ENCODE measurements at regions of chr5 and their contacts with region 1.

Region 1: GRCh38 chr5:32585446-32586275 is at the start of gene SUB1:
- DNase-seq: peak; percentile 87 to 98
- H3K4me3 ChIP-seq: peak within 1 kb of the TSS; percentile 84
- H3K27ac ChIP-seq: peak within 1 kb of the TSS; percentile 77
- H3K4me1 ChIP-seq: peaks cover 10% of the 10 kb centered on the region
- H3K27me3 ChIP-seq: no peaks in the 10 kb centered on the region
- CTCF ChIP-seq: no peak
- total RNA-seq, gene SUB1: 314 and 328 TPM in 2 replicates

Region 2: GRCh38 chr5:32174011-32174870 is 411.4 kb before region 1 on chr5 and contains the start of gene GOLPH3:
- CTCF ChIA-PET with region 1: no interaction called
- POLR2A ChIA-PET with region 1: interaction called, 9 read pairs
- intact Hi-C with region 1: loop called (anchors 2 kb)
- DNase-seq: peak; percentile 84 to 98
- H3K4me3 ChIP-seq: peak within 1 kb of the TSS; percentile 93
- H3K27ac ChIP-seq: peak within 1 kb of the TSS; percentile 95
- H3K4me1 ChIP-seq: peaks cover 43% of the 10 kb centered on the region
- H3K27me3 ChIP-seq: no peaks in the 10 kb centered on the region
- CTCF ChIP-seq: no peak
- total RNA-seq, gene GOLPH3: 179 and 267 TPM in 2 replicates

Region 3: DNA sequence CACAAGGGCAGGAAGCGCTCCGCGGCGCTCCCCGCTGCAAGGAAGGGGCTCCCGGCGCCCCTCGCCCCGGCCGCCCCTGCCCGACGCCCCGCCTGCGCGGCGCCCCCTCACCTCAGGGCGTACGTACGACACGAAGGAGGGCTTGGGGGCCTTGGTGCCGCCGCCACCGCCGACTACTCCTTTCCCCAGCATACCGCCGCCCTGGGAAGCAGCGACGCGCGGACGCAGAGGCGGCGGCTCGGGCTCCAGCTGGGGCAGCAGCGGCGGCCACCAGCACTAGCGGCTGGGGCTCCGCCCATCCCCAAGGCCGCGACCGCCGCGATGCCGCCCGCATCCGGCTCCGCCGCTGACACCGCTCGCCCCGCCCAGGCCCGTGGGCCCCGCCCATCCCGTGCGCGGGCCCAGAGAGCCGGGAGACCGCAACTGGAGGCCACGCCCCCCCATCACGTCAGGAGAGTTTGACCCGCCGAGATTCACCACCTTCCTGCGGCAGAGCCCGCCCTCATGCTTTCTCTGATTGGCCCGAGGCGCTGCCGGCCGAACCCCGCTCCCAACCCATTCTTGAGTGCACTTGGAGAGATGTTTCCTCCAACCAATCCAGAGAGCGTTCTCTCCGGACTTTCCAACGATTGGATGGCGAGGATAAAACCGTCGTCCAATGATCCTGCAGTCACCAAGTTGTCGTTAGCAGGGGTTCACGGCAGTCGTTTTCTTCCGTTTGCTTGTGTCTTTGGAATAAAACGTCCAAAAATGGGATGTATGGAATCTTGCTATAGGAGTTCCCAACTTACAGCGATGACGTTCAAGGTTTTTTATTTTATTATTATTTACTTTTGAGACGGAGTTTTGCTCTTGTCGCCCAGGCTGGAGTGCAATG is 272.8 kb before region 1 on chr5 and contains the start of gene MTMR12:
- CTCF ChIA-PET with region 1: interaction called, 3 read pairs
- POLR2A ChIA-PET with region 1: no interaction called
- intact Hi-C with region 1: loop called (anchors 10 kb)
- DNase-seq: peak; percentile 99 to 100
- H3K4me3 ChIP-seq: peak within 1 kb of the TSS; percentile 91
- H3K27ac ChIP-seq: peak within 1 kb of the TSS; percentile 14
- H3K4me1 ChIP-seq: peaks cover 10% of the 10 kb centered on the region
- H3K27me3 ChIP-seq: no peaks in the 10 kb centered on the region
- CTCF ChIP-seq: no peak
- total RNA-seq, gene MTMR12: 44.5 and 47.5 TPM in 2 replicates

Region 4: GRCh38 chr5:32390819-32391591 is 194.7 kb before region 1 on chr5:
- CTCF ChIA-PET with region 1: interaction called, 12 read pairs
- POLR2A ChIA-PET with region 1: no interaction called
- intact Hi-C with region 1: loop called (anchors 5 kb)
- DNase-seq: peak; percentile 47 to 66
- H3K4me3 ChIP-seq: no peak overlapping the region
- H3K27ac ChIP-seq: peak overlapping the region; percentile 49
- H3K4me1 ChIP-seq: no peaks in the 10 kb centered on the region
- H3K27me3 ChIP-seq: no peaks in the 10 kb centered on the region
- CTCF ChIP-seq: no peak

Region 5: DNA sequence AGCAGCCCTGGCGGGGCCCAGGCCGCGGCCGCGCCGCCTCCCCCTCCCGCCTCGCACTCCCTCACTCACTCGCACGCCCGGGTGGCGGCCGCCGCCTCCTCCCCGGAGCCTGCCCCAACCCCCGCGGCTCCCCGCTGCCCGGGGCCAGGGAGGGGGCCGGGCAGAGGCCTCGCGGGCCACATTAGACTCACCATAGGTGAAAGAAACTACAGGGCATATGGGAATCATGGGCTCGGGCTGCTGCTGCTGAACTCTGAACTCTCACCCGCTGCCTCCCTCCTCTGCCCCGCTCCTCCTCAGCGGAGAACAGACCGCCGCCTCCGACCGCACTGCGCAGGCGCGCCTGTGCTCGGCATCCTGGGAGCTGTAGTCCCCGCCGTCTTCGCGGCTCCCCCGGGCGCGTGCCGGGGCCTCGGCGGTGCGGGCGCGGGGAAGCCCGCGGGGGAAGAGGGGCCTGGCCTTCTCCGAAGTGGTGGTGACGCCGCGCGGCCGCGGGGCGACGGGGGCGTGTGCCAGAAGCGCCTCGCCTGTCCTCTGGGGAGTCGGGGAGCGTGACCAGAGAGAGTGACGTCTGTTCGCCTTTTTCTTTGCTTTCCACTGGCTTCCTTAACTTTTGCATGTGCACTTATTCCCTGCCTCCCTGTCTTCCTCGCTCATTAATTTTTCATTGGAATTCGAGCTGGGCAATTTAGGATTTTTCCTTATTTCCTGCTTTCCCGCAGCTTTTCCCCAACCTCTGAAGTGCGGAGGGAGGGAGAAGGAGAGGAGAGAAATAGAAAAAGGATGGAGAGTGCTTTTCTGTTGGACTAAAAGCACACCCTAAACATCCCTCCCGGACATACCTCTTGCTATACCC is 141.0 kb before region 1 on chr5 and contains the start of gene ZFR:
- CTCF ChIA-PET with region 1: interaction called, 4 read pairs
- POLR2A ChIA-PET with region 1: no interaction called
- intact Hi-C with region 1: loop called (anchors 1 kb)
- DNase-seq: peak; percentile 77 to 98
- H3K4me3 ChIP-seq: peak within 1 kb of the TSS; percentile 83
- H3K27ac ChIP-seq: peak within 1 kb of the TSS; percentile 61
- H3K4me1 ChIP-seq: peaks cover 40% of the 10 kb centered on the region
- H3K27me3 ChIP-seq: no peaks in the 10 kb centered on the region
- CTCF ChIP-seq: no peak
- total RNA-seq, gene ZFR: 51.8 and 69.2 TPM in 2 replicates

Region 6: GRCh38 chr5:32498484-32498883 is 87.2 kb before region 1 on chr5:
- CTCF ChIA-PET with region 1: interaction called, 10 read pairs
- POLR2A ChIA-PET with region 1: no interaction called
- intact Hi-C with region 1: no loop called
- DNase-seq: no peak
- H3K4me3 ChIP-seq: no peak overlapping the region
- H3K27ac ChIP-seq: no peak overlapping the region
- H3K4me1 ChIP-seq: no peaks in the 10 kb centered on the region
- H3K27me3 ChIP-seq: peaks cover 73% of the 10 kb centered on the region
- CTCF ChIP-seq: no peak

Region 7: GRCh38 chr5:32852535-32852934 is 266.9 kb after region 1 on chr5:
- CTCF ChIA-PET with region 1: interaction called, 3 read pairs
- POLR2A ChIA-PET with region 1: no interaction called
- intact Hi-C with region 1: loop called (anchors 1 kb)
- DNase-seq: peak in 1 of 2 experiments; percentile 91
- H3K4me3 ChIP-seq: no peak overlapping the region
- H3K27ac ChIP-seq: no peak overlapping the region
- H3K4me1 ChIP-seq: peaks cover 6% of the 10 kb centered on the region; the same call in 1 of the 2 replicates
- H3K27me3 ChIP-seq: peaks cover 10% of the 10 kb centered on the region; the same call in 1 of the 2 replicates
- CTCF ChIP-seq: peak; percentile 66

Region 8: DNA sequence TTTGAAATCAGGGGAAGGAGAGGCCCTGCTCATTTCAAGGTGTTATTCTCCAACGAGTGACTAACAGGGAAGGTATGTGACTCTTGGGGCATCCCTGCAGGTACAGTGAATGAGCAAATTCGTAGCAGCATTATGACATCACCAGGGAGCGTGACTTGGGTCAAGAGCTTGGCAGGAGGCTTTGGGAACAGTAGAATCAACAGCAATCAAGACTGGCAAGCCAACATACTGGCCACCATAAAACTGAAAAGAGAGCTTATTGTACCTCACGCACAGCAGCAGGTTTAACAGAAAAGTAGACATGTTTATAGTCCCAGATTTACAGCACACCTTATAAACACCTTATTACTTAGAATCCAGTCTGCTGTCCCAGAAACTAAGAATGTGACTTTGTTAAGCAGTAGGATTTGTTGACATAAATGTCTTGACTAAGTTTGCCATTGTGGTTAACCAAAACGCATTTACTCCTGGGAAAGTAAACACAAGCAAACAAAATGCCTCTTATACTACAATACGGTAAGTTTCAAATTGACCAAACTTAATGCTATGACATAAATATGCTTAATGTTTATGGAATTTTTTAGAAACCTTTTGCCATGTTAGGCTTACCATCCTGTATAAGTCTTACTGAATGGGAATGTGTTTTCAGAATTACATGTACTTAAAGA is 423.2 kb after region 1 on chr5:
- CTCF ChIA-PET with region 1: no interaction called
- POLR2A ChIA-PET with region 1: no interaction called
- intact Hi-C with region 1: no loop called
- DNase-seq: peak; percentile 73 to 92
- H3K4me3 ChIP-seq: no peak overlapping the region
- H3K27ac ChIP-seq: peak overlapping the region; percentile 48
- H3K4me1 ChIP-seq: peaks cover 14% of the 10 kb centered on the region
- H3K27me3 ChIP-seq: no peaks in the 10 kb centered on the region
- CTCF ChIP-seq: no peak